ENCODE measurements at regions of chrX and their contacts with region 1.

Region 1: DNA sequence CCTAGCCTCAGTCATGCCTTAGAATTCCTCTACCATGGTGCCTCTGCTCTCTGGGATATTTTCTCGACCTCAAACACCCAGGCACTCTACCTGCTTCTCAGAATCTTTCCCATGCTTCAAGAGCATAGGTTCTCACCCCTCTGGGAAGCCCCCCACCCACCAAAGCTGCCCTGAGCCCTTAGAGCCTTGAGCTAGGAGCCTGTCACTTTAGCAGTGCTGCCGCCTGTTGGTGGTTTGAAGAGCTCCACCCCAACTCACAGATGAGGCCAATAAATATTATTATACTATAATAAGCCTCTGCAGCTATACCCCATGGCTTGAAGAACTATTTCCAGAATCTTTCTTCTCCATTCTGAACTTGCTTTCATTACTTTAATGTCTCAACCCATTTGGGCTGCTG is 109.7 kb downstream of the RTL5 start:
- DNase-seq: no peak
- H3K4me3 ChIP-seq: no peak overlapping the region
- H3K27ac ChIP-seq: peak overlapping the region in 1 of 2 donors; percentile 62
- H3K4me1 ChIP-seq: no peaks in the 10 kb centered on the region
- H3K27me3 ChIP-seq: no peaks in the 10 kb centered on the region
- CTCF ChIP-seq: peak in 1 of 4 experiments; percentile 18
- POLR2A ChIP-seq: no peak

Region 2: DNA sequence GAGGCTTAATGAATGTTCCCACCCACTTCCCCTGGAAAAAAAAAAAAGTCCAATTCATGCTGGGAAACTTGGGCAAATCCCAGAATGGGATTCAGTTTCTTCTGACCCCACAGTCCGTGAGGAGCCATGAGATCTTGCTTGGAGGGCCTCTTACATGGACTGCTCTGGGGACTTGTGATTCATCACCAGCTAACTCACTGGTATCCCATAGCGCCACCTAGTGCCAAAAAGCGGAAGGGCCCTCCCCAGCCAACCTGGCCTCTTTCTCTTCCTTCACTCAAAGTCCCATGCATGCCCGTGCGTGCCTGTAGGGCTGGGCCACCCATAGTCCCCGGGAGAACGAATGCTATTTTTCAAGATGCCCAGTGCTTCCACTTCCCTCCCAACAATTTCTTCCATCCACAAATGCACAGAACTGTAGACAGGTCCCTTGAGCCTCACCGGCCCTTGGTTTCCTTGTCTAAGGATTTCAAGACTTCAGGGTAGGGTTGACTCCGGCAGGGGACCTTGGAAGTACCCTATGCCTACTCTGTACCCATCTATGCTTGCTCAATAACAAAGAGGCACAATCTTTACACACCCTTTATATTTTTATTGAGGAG is 104.7 kb after region 1 on chrX:
- intact Hi-C with region 1: loop called (anchors 10 kb)
- DNase-seq: peak; percentile 87 to 90
- H3K4me3 ChIP-seq: no peak overlapping the region
- H3K27ac ChIP-seq: peak overlapping the region; percentile 67 to 69
- H3K4me1 ChIP-seq: no peaks in the 10 kb centered on the region
- H3K27me3 ChIP-seq: no peaks in the 10 kb centered on the region
- CTCF ChIP-seq: peak; percentile 72 to 83 (median 82)
- POLR2A ChIP-seq: no peak

Region 3: GRCh38 chrX:72540318-72540717 is 518.3 kb after region 1 on chrX:
- intact Hi-C with region 1: no loop called
- DNase-seq: no peak
- H3K4me3 ChIP-seq: no peak overlapping the region
- H3K27ac ChIP-seq: no peak overlapping the region
- H3K4me1 ChIP-seq: no peaks in the 10 kb centered on the region
- H3K27me3 ChIP-seq: no peaks in the 10 kb centered on the region
- CTCF ChIP-seq: peak in 3 of 4 experiments; percentile 12 to 23 (median 14)
- POLR2A ChIP-seq: no peak

Measured in uterus (tissue), 4 donors.